PC-3 (cell line): ENCODE measurements at regions of chr12 and their contacts with region 1.

Region 1: DNA sequence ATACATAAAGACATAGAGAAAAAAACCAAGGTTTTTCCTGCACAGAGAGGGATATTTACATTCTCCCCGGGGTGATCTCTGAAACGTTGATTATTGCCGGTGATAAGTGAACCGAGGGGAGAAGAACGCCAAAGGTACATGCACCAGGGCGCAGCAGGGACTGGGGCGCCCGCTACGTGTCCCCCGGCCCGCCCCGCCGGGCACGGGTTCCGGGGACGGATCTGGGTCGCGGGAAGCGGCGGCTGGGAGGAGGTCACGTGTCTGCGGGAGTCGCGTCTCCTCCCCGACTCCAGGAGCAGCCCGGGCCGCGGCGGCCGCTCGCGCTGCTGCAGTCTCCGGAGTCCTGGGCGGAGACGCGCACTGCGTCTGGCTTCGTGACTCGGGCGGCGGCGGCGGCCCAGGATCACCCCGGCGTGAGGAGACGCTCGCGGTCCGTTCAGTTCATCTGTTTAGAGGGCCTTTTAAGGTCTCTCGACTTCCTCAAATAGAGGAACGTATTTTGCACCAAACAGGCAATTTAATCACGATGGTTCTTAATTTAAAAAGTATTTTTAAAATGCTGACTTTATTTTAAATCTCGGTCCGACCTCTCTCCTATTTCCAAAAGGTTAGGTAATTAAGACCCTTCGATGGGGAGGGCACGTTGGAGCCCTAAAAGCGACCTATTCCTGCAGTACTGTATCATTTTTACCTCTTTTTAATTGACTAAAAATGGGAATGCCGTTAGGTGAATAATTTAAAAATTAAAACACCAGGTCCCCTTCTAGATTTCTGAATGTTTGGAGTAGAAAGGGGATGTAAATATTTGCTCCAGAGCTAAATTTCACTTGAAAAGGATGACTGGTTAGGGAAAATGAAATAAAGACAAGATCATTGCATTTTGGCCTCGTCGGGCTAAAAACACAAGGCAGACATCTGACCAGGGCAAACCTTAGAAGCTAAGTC is 1.8 kb upstream of the BHLHE41 start:
- DNase-seq: peak; percentile 94
- ATAC-seq: peak; percentile 56
- H3K4me3 ChIP-seq: peak overlapping the region; percentile 77
- H3K27ac ChIP-seq: peak overlapping the region; percentile 89
- H3K4me1 ChIP-seq: peaks cover 23% of the 10 kb centered on the region
- H3K27me3 ChIP-seq: no peaks in the 10 kb centered on the region
- CTCF ChIP-seq: no peak

Region 2: GRCh38 chr12:26113853-26114719 is 12.5 kb before region 1 on chr12:
- CTCF ChIA-PET with region 1: no interaction called
- POLR2A ChIA-PET with region 1: interaction called, 3 read pairs
- intact Hi-C with region 1: loop called (anchors 1 kb)
- DNase-seq: peak; percentile 94
- ATAC-seq: peak; percentile 83
- H3K4me3 ChIP-seq: peak overlapping the region; percentile 71
- H3K27ac ChIP-seq: peak overlapping the region; percentile 89
- H3K4me1 ChIP-seq: peaks cover 48% of the 10 kb centered on the region
- H3K27me3 ChIP-seq: no peaks in the 10 kb centered on the region
- CTCF ChIP-seq: no peak; the same call in 1 of the 2 replicates

Region 3: GRCh38 chr12:26136688-26137087 is 10.1 kb after region 1 on chr12:
- CTCF ChIA-PET with region 1: no interaction called
- POLR2A ChIA-PET with region 1: no interaction called
- intact Hi-C with region 1: no loop called
- DNase-seq: no peak
- ATAC-seq: no peak
- H3K4me3 ChIP-seq: no peak overlapping the region
- H3K27ac ChIP-seq: no peak overlapping the region
- H3K4me1 ChIP-seq: peaks cover 5% of the 10 kb centered on the region
- H3K27me3 ChIP-seq: no peaks in the 10 kb centered on the region
- CTCF ChIP-seq: no peak

Region 4: GRCh38 chr12:26179828-26180227 is 53.2 kb after region 1 on chr12:
- CTCF ChIA-PET with region 1: no interaction called
- POLR2A ChIA-PET with region 1: no interaction called
- intact Hi-C with region 1: loop called (anchors 1 kb)
- DNase-seq: no peak
- ATAC-seq: 0 out of 2 replicates have a peak, but pooled peaks have one; percentile 19
- H3K4me3 ChIP-seq: no peak overlapping the region
- H3K27ac ChIP-seq: no peak overlapping the region
- H3K4me1 ChIP-seq: peaks cover 8% of the 10 kb centered on the region; the same call in 1 of the 2 replicates
- H3K27me3 ChIP-seq: no peaks in the 10 kb centered on the region
- CTCF ChIP-seq: no peak

Region 5: DNA sequence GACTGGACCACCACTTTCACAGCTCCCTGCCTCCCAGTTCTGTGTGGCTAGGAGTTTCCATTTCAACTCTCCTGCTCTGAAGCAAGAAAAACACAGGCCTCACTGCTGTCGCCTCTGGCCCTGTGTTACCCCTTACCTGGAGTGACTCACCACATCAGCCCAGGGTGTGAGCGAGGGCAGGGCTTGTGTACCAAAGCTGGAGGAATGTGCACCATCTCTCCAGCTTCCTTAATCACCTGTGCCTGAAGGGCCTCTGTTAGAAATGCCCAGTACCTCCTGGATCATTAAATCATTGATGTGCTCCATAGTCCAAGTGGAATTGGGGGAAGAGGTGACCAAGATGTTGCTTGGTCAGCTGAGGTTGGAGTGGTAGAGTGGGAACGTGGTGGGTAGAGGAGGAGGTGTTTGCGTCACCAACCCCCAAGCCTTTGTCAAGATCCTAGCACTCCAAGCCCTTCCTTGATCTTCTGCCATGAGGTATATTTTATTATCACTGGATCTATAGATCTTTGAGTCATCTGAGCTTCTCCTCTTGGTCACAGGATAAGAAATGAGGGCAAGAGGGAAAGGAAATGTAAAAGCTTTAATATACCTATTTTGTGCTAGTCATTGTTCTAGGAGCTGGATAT is 120.0 kb after region 1 on chr12:
- CTCF ChIA-PET with region 1: interaction called, 3 read pairs
- POLR2A ChIA-PET with region 1: interaction called, 7 read pairs
- intact Hi-C with region 1: loop called (anchors 1 kb)
- DNase-seq: peak; percentile 99
- ATAC-seq: peak; percentile 94
- H3K4me3 ChIP-seq: peak overlapping the region; percentile 23; the same call in 1 of the 2 replicates
- H3K27ac ChIP-seq: peak overlapping the region; percentile 94
- H3K4me1 ChIP-seq: peaks cover 56% of the 10 kb centered on the region
- H3K27me3 ChIP-seq: no peaks in the 10 kb centered on the region
- CTCF ChIP-seq: no peak

Region 6: GRCh38 chr12:26298785-26299621 is 172.4 kb after region 1 on chr12:
- CTCF ChIA-PET with region 1: interaction called, 3 read pairs
- POLR2A ChIA-PET with region 1: no interaction called
- intact Hi-C with region 1: loop called (anchors 1 kb)
- DNase-seq: peak; percentile 95
- ATAC-seq: peak; percentile 99
- H3K4me3 ChIP-seq: peak overlapping the region; percentile 60
- H3K27ac ChIP-seq: peak overlapping the region; percentile 75
- H3K4me1 ChIP-seq: peaks cover 20% of the 10 kb centered on the region
- H3K27me3 ChIP-seq: no peaks in the 10 kb centered on the region
- CTCF ChIP-seq: peak; percentile 71

Region 7: GRCh38 chr12:26416550-26416949 is 289.9 kb after region 1 on chr12:
- CTCF ChIA-PET with region 1: no interaction called
- POLR2A ChIA-PET with region 1: no interaction called
- intact Hi-C with region 1: loop called (anchors 5 kb)
- DNase-seq: peak; percentile 32
- ATAC-seq: peak; percentile 82
- H3K4me3 ChIP-seq: no peak overlapping the region
- H3K27ac ChIP-seq: no peak overlapping the region
- H3K4me1 ChIP-seq: 0 out of 2 replicates have a peak, but pooled peaks cover 5% of the 10 kb centered on the region
- H3K27me3 ChIP-seq: no peaks in the 10 kb centered on the region
- CTCF ChIP-seq: no peak

Region 8: DNA sequence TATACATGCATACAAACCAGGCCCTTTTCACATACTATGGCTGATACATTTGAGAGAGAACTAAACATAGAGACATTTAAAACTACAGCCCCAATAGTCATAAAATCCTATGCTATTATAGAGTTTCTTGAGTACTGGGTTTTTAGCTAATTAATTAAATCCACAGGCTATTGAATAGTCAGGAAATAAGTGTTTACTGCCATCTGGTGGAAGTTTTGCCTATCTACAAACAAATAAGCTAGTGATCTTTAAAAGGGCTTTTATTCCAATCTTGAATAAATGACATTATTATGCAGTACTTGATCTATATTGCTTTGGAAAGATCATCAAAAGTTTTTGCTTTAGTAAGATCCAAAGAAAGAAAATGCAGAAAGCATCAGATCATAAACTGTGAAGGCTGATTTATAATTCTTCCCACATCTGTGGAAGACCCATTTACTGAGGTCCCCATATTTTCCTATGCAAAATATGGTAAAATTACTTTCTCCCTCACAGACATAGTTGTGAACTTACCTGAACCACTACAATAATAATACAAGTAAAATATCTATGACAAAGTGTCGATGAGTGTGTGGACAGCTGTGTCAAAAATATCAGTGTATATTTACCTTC is 575.1 kb after region 1 on chr12:
- CTCF ChIA-PET with region 1: interaction called, 4 read pairs
- POLR2A ChIA-PET with region 1: no interaction called
- intact Hi-C with region 1: loop called (anchors 1 kb)
- DNase-seq: peak; percentile 80
- ATAC-seq: no peak
- H3K4me3 ChIP-seq: no peak overlapping the region
- H3K27ac ChIP-seq: no peak overlapping the region
- H3K4me1 ChIP-seq: peaks cover 29% of the 10 kb centered on the region
- H3K27me3 ChIP-seq: no peaks in the 10 kb centered on the region
- CTCF ChIP-seq: peak; percentile 95